ENCODE measurements at regions of chr6 and their contacts with region 1.

Region 1: DNA sequence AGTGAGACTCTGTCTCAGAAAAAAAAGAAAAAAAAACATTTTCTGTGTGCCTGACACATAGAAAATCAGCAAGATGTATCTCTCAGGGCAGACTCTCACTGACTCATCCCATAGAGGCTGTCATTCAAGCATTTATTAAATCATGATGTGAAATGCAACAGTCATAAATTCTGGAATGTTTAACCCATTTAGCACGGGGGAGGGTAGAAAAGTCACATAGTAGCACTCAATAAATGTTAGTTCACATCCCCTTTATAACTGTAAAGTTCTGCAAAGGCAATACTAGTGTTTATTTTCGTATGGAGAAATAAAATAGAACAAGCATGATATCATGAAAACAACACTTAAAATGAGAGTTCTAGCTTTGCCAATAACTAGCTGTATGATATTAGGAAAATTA is 15.5 kb upstream of the CARMIL1 start:
- DNase-seq: no peak
- ATAC-seq: no peak
- H3K4me3 ChIP-seq: no peak overlapping the region
- H3K27ac ChIP-seq: no peak overlapping the region
- H3K4me1 ChIP-seq: no peaks in the 10 kb centered on the region
- H3K27me3 ChIP-seq: peaks cover 0 to 3% of the 10 kb centered on the region in 2 experiments; a peak in 1 of 4 replicates
- CTCF ChIP-seq: no peak
- EP300 ChIP-seq: no peak
- POLR2A ChIP-seq: no peak
- RAD21 ChIP-seq: no peak

Region 2: DNA sequence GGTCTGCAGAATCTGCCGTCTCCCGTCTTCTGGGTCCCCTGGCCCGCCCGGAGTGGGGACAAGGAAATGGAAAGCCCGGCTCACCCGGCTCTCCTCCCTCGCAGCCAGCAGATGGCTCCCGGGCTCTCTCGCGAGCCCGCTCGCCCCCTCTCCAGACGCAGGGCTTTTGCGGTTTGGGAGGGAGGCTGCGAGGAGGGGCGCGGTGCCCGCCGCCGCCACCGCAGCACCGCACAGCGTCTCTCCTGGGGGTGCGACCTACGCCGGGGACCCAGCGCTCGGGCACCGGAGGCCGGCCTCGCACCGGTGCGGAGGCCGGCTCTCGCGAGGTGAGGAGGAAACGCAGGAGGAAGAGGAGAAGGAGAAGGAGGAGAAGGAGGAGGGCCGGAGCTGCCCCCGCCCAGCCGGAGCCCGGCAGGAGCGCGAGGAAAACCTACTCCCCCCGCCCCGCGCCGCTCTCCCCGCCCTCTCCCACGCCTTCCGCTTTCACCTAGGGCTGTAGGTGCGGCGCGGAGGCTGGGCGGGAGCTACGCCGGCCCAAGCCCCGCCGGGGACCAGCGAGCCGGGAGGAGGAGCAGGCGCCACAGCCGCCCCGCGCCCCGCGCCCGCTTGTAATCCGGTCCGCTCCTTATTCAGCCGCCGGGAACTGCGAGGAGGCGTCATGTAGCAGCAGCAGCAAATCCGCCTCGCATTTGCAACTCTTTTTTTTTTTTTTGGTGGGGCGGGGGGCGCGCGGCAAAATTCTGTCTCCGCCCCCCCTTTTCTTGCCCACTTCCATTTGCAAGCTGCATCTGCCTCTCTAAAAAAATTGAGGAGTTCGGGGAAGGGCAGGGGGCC is 15.5 kb after region 1 on chr6 and contains the start of gene CARMIL1:
- CTCF ChIA-PET with region 1: interaction called, 47 read pairs
- POLR2A ChIA-PET with region 1: no interaction called
- RAD21 ChIA-PET with region 1: interaction called, 37 read pairs
- SMC1A ChIA-PET with region 1: interaction called, 44 read pairs
- in situ Hi-C with region 1: no loop called
- intact Hi-C with region 1: no loop called
- DNase-seq: no peak
- ATAC-seq: peak; percentile 88
- H3K4me3 ChIP-seq: peak within 1 kb of the TSS; percentile 92
- H3K27ac ChIP-seq: peak within 1 kb of the TSS; percentile 50
- H3K4me1 ChIP-seq: 0 out of 2 replicates have a peak, but pooled peaks cover 5% of the 10 kb centered on the region
- H3K27me3 ChIP-seq: no peaks in the 10 kb centered on the region
- CTCF ChIP-seq: peak; percentile 64 to 81 (median 75)
- EP300 ChIP-seq: no peak
- POLR2A ChIP-seq: no peak
- RAD21 ChIP-seq: peak; percentile 79
- polyA plus RNA-seq, gene CARMIL1: 9.4 to 11.3 TPM

Region 3: DNA sequence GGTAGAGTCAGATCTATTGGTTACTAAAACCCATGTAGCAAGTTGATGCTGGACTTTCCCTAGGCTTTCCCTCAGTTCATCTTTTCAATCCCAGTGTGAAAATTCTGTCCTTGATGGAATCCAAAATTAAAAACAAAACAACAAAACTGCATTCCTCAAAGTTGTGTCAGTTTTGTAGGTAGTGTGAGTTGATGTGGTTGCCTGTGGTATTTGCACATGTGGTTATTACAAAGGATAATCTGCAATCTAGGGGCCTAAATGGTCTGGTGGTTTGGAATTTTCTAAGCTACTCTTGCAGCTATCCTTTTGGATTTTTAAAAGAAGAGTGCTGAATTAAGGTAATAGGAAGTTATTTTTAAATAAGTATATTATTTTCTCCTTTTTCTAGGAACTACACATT is 256.2 kb after region 1 on chr6:
- CTCF ChIA-PET with region 1: interaction called, 10 read pairs
- POLR2A ChIA-PET with region 1: no interaction called
- RAD21 ChIA-PET with region 1: interaction called, 3 read pairs
- SMC1A ChIA-PET with region 1: interaction called, 8 read pairs
- in situ Hi-C with region 1: no loop called
- intact Hi-C with region 1: no loop called
- DNase-seq: no peak
- ATAC-seq: no peak
- H3K4me3 ChIP-seq: no peak overlapping the region
- H3K27ac ChIP-seq: no peak overlapping the region
- H3K4me1 ChIP-seq: no peaks in the 10 kb centered on the region
- H3K27me3 ChIP-seq: no peaks in the 10 kb centered on the region
- CTCF ChIP-seq: no peak
- EP300 ChIP-seq: no peak
- POLR2A ChIP-seq: no peak
- RAD21 ChIP-seq: no peak

Region 4: GRCh38 chr6:25556516-25556915 is 292.9 kb after region 1 on chr6:
- CTCF ChIA-PET with region 1: interaction called, 151 read pairs
- POLR2A ChIA-PET with region 1: interaction called, 3 read pairs
- RAD21 ChIA-PET with region 1: interaction called, 56 read pairs
- SMC1A ChIA-PET with region 1: interaction called, 79 read pairs
- in situ Hi-C with region 1: loop called (anchors 5 kb)
- intact Hi-C with region 1: loop called (anchors 1 kb)
- DNase-seq: peak; percentile 28
- ATAC-seq: peak; percentile 90
- H3K4me3 ChIP-seq: no peak overlapping the region
- H3K27ac ChIP-seq: no peak overlapping the region
- H3K4me1 ChIP-seq: no peaks in the 10 kb centered on the region
- H3K27me3 ChIP-seq: no peaks in the 10 kb centered on the region
- CTCF ChIP-seq: peak; percentile 80 to 83 (median 81)
- EP300 ChIP-seq: no peak
- POLR2A ChIP-seq: no peak
- RAD21 ChIP-seq: peak; percentile 60

Region 5: DNA sequence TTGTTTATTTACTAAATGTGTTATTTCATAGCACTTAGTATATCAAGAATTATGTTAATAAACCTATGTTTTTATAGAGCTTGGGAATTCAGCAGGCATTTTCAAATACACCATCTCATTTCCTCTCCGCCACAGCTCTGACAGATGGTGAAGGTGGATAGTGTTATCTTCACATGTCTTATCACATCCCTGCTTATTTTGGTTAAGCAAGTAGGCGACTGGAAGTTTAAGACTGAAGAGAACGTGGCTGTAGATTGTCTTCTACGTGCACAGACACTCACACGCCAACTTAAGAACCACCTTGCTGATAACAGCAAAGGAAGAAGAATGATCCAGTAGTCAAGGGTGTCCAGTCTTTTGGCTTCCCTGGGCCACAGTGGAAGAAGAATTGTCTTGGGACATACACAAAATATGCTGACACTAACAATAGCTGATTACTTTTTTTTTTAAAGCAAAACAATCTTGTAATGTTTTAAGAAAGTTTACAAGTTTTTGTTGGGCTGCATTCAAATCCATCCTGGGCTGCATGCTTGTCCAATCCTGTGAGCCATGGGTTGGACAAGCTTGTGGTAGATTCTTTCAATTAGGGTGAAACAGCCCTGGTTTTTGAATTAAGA is 345.0 kb after region 1 on chr6:
- CTCF ChIA-PET with region 1: interaction called, 44 read pairs
- POLR2A ChIA-PET with region 1: no interaction called
- RAD21 ChIA-PET with region 1: interaction called, 5 read pairs
- SMC1A ChIA-PET with region 1: interaction called, 10 read pairs
- in situ Hi-C with region 1: no loop called
- intact Hi-C with region 1: no loop called
- DNase-seq: no peak
- ATAC-seq: no peak
- H3K4me3 ChIP-seq: no peak overlapping the region
- H3K27ac ChIP-seq: no peak overlapping the region
- H3K4me1 ChIP-seq: no peaks in the 10 kb centered on the region
- H3K27me3 ChIP-seq: no peaks in the 10 kb centered on the region
- CTCF ChIP-seq: no peak
- EP300 ChIP-seq: no peak
- POLR2A ChIP-seq: no peak
- RAD21 ChIP-seq: no peak

Measured in GM12878 (cell line).